ENCODE measurements at regions of chr15 and their contacts with region 1.

Region 1: DNA sequence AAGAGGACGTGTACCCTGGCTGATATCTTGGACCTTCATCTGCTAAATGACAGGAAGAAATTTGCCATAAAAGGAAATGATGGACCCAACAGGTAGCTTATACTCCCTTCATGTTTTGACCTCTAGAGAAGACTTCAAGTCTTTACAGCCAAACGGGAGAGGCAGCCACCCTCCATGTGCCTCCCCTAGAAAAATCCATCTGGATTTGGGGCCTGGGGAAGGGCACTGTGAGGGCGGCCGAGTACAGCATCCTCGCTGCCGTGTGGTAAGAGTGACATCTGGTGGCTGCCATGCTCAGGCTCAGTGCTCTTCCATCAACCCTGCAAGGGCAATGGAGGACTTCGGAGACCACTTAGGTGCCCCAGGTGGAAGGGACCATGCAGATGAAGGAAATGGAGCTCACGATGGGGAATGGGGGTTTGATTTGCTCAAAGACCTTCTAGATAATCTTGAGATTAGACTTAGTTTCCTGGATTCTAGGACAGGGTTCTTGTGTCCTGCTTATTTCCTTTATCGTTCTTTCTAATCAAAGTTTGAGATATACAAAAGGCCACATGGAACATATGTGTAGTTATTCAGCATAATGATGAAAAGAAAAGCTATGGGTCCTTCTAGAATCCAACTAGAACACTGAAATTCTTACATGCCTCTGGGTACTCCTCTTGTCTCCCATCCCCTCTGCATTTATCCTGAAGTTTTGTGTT is 44.4 kb downstream of the AQP9 start:
- DNase-seq: peak; percentile 56
- H3K4me3 ChIP-seq: no peak overlapping the region
- H3K27ac ChIP-seq: no peak overlapping the region
- H3K4me1 ChIP-seq: no peaks in the 10 kb centered on the region
- H3K27me3 ChIP-seq: peaks cover 6% of the 10 kb centered on the region
- CTCF ChIP-seq: peak; percentile 86

Region 2: GRCh38 chr15:57561041-57561711 is 621.4 kb before region 1 on chr15:
- CTCF ChIA-PET with region 1: interaction called, 3 read pairs
- POLR2A ChIA-PET with region 1: no interaction called
- intact Hi-C with region 1: loop called (anchors 2 kb)
- DNase-seq: peak; percentile 80
- H3K4me3 ChIP-seq: no peak overlapping the region
- H3K27ac ChIP-seq: no peak overlapping the region
- H3K4me1 ChIP-seq: no peaks in the 10 kb centered on the region
- H3K27me3 ChIP-seq: no peaks in the 10 kb centered on the region
- CTCF ChIP-seq: peak; percentile 91

Region 3: DNA sequence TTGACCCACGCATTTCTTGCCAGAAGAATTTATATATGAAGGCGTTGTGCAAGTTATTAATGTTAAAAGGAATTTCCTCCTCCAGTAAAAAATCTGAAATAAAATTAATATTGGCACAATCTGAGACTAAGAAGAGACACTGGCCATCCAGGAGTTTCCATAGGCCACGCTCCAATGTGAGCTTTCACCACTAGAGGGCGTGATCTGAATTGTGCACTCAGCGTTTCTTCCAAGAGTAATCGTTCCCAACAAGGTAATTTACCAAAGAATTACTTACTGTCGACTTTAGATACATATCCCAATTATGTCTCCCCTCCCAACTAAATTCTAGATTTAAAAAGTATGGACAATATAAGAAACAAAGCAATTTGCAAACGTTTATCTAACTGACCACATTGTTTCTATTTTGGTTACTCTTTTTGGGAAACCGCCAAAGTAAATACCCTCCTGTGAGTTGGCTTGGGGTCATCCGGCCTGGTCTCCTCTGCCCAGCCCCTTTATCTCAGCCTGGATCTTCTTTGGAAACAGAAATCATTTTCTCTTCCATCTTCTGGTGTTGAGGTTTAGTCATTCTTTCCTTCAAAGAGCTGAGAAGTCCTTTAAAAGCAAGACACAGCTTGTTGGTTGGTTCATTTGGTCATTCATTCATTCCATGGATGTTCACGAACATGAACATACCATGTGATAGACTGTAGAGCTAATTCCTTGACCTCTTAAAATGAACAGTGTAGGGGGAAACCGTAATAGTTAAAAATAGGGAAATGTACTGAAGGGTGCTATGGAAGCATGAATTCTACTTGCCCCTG is 449.9 kb before region 1 on chr15:
- CTCF ChIA-PET with region 1: no interaction called
- POLR2A ChIA-PET with region 1: no interaction called
- intact Hi-C with region 1: loop called (anchors 10 kb)
- DNase-seq: peak; percentile 68
- H3K4me3 ChIP-seq: no peak overlapping the region
- H3K27ac ChIP-seq: no peak overlapping the region
- H3K4me1 ChIP-seq: peaks cover 12% of the 10 kb centered on the region
- H3K27me3 ChIP-seq: no peaks in the 10 kb centered on the region
- CTCF ChIP-seq: peak; percentile 94

Region 4: GRCh38 chr15:57866149-57866736 is 316.4 kb before region 1 on chr15:
- CTCF ChIA-PET with region 1: no interaction called
- POLR2A ChIA-PET with region 1: no interaction called
- intact Hi-C with region 1: loop called (anchors 1 kb)
- DNase-seq: peak; percentile 79
- H3K4me3 ChIP-seq: no peak overlapping the region
- H3K27ac ChIP-seq: no peak overlapping the region
- H3K4me1 ChIP-seq: no peaks in the 10 kb centered on the region
- H3K27me3 ChIP-seq: no peaks in the 10 kb centered on the region
- CTCF ChIP-seq: peak; percentile 88

Region 5: GRCh38 chr15:58077427-58077826 is 105.2 kb before region 1 on chr15:
- CTCF ChIA-PET with region 1: interaction called, 3 read pairs
- POLR2A ChIA-PET with region 1: no interaction called
- intact Hi-C with region 1: loop called (anchors 5 kb)
- DNase-seq: no peak
- H3K4me3 ChIP-seq: no peak overlapping the region
- H3K27ac ChIP-seq: no peak overlapping the region
- H3K4me1 ChIP-seq: no peaks in the 10 kb centered on the region
- H3K27me3 ChIP-seq: peaks cover 13% of the 10 kb centered on the region
- CTCF ChIP-seq: peak; percentile 36; the same call in 1 of the 2 replicates

Region 6: GRCh38 chr15:58724466-58724865 is 541.9 kb after region 1 on chr15:
- CTCF ChIA-PET with region 1: no interaction called
- POLR2A ChIA-PET with region 1: interaction called, 13 read pairs
- intact Hi-C with region 1: no loop called
- DNase-seq: no peak
- H3K4me3 ChIP-seq: no peak overlapping the region
- H3K27ac ChIP-seq: no peak overlapping the region
- H3K4me1 ChIP-seq: peaks cover 3% of the 10 kb centered on the region
- H3K27me3 ChIP-seq: no peaks in the 10 kb centered on the region
- CTCF ChIP-seq: no peak

Measured in A673 (cell line).